ENCODE measurements at regions of chr11 and their contacts with region 1.

Region 1: GRCh38 chr11:77473801-77474683 is at the start of gene PAK1:
- DNase-seq: peak; percentile 83 to 93
- H3K4me3 ChIP-seq: peak within 1 kb of the TSS; percentile 83
- H3K27ac ChIP-seq: peak within 1 kb of the TSS; percentile 18
- H3K4me1 ChIP-seq: peaks cover 36% of the 10 kb centered on the region
- H3K27me3 ChIP-seq: no peaks in the 10 kb centered on the region
- CTCF ChIP-seq: peak; percentile 43
- total RNA-seq, gene PAK1: 80.0 and 109 TPM in 2 replicates

Region 2: DNA sequence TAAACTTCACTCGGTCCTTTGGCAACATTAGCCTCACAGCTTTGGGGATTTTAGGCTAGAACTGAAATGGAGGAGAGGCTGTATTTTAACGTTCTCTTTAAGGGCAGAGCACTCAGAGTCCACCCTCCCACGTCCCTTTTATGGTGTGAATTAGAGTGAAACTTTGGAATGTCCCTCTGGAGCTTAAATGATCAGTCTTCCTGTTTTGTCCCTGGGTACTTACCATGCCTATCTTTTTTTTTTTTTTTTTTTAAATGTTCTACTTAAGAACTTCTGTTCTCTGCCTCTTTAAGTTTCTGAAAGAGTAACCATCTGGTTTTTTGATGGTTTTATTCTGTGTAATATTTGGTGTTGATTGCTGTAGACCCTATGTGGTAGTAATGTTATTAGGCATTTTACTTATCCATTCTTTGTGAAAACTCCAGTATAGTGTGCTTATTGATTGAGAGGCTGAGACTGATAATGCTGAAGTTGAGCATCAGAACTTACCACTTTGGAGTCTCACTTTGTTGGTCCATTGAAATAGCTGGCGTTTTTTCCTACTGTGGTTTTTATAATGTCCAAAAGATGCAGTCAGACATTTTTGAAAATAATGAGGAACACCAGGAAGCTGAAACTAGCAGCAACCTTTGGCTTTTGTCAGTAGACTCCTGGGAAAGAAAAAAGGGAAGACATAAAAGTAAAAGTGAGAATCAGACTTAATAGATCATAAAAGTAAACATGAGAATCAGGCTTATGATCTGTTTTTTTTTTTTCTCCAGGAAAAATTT is 1647.4 kb before region 1 on chr11:
- CTCF ChIA-PET with region 1: no interaction called
- POLR2A ChIA-PET with region 1: interaction called, 10 read pairs
- intact Hi-C with region 1: no loop called
- DNase-seq: no peak
- H3K4me3 ChIP-seq: no peak overlapping the region
- H3K27ac ChIP-seq: peak overlapping the region; percentile 23; the same call in 1 of the 2 replicates
- H3K4me1 ChIP-seq: no peaks in the 10 kb centered on the region
- H3K27me3 ChIP-seq: no peaks in the 10 kb centered on the region
- CTCF ChIP-seq: no peak

Region 3: GRCh38 chr11:77287615-77288273 is 186.3 kb before region 1 on chr11:
- CTCF ChIA-PET with region 1: no interaction called
- POLR2A ChIA-PET with region 1: interaction called, 11 read pairs
- intact Hi-C with region 1: no loop called
- DNase-seq: peak; percentile 12 to 58
- H3K4me3 ChIP-seq: no peak overlapping the region
- H3K27ac ChIP-seq: no peak overlapping the region
- H3K4me1 ChIP-seq: peaks cover 8% of the 10 kb centered on the region; the same call in 1 of the 2 replicates
- H3K27me3 ChIP-seq: no peaks in the 10 kb centered on the region
- CTCF ChIP-seq: no peak

Region 4: DNA sequence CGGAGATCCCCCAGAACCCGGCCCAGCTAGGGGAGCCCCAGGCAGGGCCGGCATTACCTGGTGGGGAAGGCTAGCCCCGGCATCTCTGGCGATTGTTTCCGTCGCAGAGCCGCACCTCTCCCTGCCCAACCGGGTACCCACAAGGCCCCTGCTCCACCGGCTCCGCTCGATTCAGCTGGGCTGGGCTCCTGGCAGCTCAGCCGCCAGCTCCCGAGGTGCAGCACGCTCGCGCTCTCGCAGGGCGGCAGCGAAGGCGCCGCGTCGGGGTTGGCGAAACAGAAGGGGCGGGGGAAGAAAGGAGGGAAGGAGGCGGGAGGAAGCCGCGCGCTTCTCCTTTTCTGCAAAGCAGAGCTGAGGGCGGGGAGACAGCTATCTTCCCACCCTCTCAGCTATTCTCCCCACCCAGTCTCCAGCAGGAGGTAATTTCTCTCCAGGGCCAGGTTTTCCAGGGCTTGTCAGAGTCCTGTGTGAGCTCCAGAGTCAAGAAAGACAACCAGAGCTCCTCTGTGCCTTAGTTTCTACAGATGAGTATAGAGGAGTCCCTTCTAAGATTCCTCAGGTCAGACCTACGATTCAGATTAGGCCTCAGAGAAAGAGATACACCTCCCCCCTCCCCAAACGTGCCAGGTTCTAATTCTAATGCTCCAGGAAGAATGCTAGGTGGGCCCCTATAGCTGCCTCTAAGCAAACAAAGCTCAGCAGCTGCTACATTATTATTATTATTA is 62.2 kb before region 1 on chr11:
- CTCF ChIA-PET with region 1: interaction called, 11 read pairs
- POLR2A ChIA-PET with region 1: no interaction called
- intact Hi-C with region 1: loop called (anchors 5 kb)
- DNase-seq: peak; percentile 84 to 94
- H3K4me3 ChIP-seq: peak overlapping the region; percentile 44; the same call in 1 of the 2 replicates
- H3K27ac ChIP-seq: no peak overlapping the region
- H3K4me1 ChIP-seq: peaks cover 31% of the 10 kb centered on the region
- H3K27me3 ChIP-seq: no peaks in the 10 kb centered on the region
- CTCF ChIP-seq: no peak

Region 5: GRCh38 chr11:77525452-77526091 is 51.5 kb after region 1 on chr11:
- CTCF ChIA-PET with region 1: no interaction called
- POLR2A ChIA-PET with region 1: no interaction called
- intact Hi-C with region 1: no loop called
- DNase-seq: no peak
- H3K4me3 ChIP-seq: no peak overlapping the region
- H3K27ac ChIP-seq: no peak overlapping the region
- H3K4me1 ChIP-seq: no peaks in the 10 kb centered on the region
- H3K27me3 ChIP-seq: no peaks in the 10 kb centered on the region
- CTCF ChIP-seq: no peak

Measured in PC-9 (cell line).